Gastrocnemius medialis (tissue), 4 donors: ENCODE measurements at regions of chr11 and their contacts with region 1.

Region 1: GRCh38 chr11:44585421-44585820 is 20.0 kb downstream of the CD82 start:
- DNase-seq: no peak
- ATAC-seq: no peak
- H3K4me3 ChIP-seq: no peak overlapping the region
- H3K27ac ChIP-seq: no peak overlapping the region
- H3K4me1 ChIP-seq: peaks cover 10 to 17% of the 10 kb centered on the region in 2 donors
- H3K27me3 ChIP-seq: no peaks in the 10 kb centered on the region
- CTCF ChIP-seq: no peak
- POLR2A ChIP-seq: no peak

Region 2: GRCh38 chr11:44235765-44236201 is 349.6 kb before region 1 on chr11:
- in situ Hi-C with region 1: no loop called
- intact Hi-C with region 1: no loop called
- DNase-seq: no peak
- ATAC-seq: peak; percentile 65 to 72
- H3K4me3 ChIP-seq: no peak overlapping the region
- H3K27ac ChIP-seq: peak overlapping the region in 2 of 4 donors; percentile 1 to 37
- H3K4me1 ChIP-seq: peaks cover 9 to 15% of the 10 kb centered on the region in 2 donors
- H3K27me3 ChIP-seq: no peaks in the 10 kb centered on the region
- CTCF ChIP-seq: no peak
- POLR2A ChIP-seq: no peak

Region 3: GRCh38 chr11:44600839-44601383 is 15.5 kb after region 1 on chr11:
- in situ Hi-C with region 1: no loop called
- intact Hi-C with region 1: loop called (anchors 2 kb)
- DNase-seq: no peak
- ATAC-seq: no peak
- H3K4me3 ChIP-seq: no peak overlapping the region
- H3K27ac ChIP-seq: no peak overlapping the region
- H3K4me1 ChIP-seq: peaks cover 17 to 45% of the 10 kb centered on the region in 2 donors
- H3K27me3 ChIP-seq: no peaks in the 10 kb centered on the region
- CTCF ChIP-seq: no peak
- POLR2A ChIP-seq: no peak